CD4-positive, alpha-beta T cell (primary cell): ENCODE measurements at regions of chr9 and their contacts with region 1.

Region 1: GRCh38 chr9:96449845-96450612 is at the start of gene HABP4:
- DNase-seq: peak; percentile 89 to 98 (median 95)
- ATAC-seq: peak; percentile 90
- H3K4me3 ChIP-seq: peak within 1 kb of the TSS; percentile 89
- H3K4me3 Mint-ChIP-seq: peak within 1 kb of the TSS; percentile 95
- H3K27ac ChIP-seq: peak within 1 kb of the TSS in 1 of 2 donors; percentile 17
- H3K27ac Mint-ChIP-seq: peak within 1 kb of the TSS; percentile 86
- H3K4me1 ChIP-seq: peaks cover 27% of the 10 kb centered on the region
- H3K4me1 Mint-ChIP-seq: peaks cover 27% of the 10 kb centered on the region
- H3K27me3 ChIP-seq: no peaks in the 10 kb centered on the region
- H3K27me3 Mint-ChIP-seq: peaks cover 7% of the 10 kb centered on the region
- CTCF ChIP-seq: no peak
- total RNA-seq, gene HABP4: 29.7 to 31.7 TPM

Region 2: DNA sequence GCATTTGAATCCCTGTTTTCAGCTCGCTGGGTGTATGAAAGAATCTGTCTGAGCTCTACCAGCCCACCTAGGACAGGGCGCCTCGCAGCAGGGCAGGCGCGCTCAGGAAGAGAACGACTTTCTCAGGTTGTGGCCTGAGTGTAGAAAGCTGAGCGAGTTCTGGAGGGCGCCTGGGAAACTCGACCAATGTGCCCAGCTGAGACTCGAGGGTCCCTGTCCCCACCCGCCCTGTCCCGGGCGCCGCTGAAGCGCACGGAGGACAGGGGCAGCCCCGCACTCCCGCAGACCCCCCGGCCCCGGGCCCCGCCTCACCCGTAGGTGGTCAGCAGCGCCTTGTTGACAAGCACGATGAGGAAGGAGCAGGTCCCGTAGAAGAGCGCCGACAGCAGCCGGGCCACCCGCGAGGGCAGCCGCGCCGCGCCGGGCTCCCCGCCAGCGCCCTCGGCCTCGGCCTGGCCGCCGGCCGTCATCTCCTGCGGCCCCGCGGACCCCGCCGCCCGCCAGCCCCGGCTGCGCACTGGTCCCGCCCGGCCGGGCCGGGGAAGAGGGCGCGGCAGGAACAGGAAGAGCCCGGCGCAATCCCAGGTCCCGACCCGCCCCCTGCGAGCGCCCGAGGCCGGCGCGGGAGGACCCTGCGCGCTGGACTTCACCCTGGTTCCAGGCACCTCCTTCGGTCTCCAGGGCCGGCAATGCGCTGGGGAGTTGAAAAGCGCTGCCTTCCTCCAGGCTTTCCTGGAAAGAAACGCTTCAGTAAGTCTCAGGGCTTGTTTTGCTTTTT is 66.7 kb before region 1 on chr9 and contains the start of gene SLC35D2:
- CTCF ChIA-PET with region 1: interaction called, 4 read pairs
- POLR2A ChIA-PET with region 1: interaction called, 5 read pairs
- intact Hi-C with region 1: loop called in 1 of 2 experiments (anchors 5 kb)
- DNase-seq: peak in 6 of 14 experiments; percentile 4 to 45 (median 21)
- ATAC-seq: peak; percentile 48
- H3K4me3 ChIP-seq: peak within 1 kb of the TSS; percentile 54
- H3K4me3 Mint-ChIP-seq: peak within 1 kb of the TSS; percentile 90
- H3K27ac ChIP-seq: no peak within 1 kb of the TSS
- H3K27ac Mint-ChIP-seq: peak within 1 kb of the TSS; percentile 84
- H3K4me1 ChIP-seq: peaks cover 28% of the 10 kb centered on the region
- H3K4me1 Mint-ChIP-seq: peaks cover 27% of the 10 kb centered on the region
- H3K27me3 ChIP-seq: no peaks in the 10 kb centered on the region
- H3K27me3 Mint-ChIP-seq: no peaks in the 10 kb centered on the region
- CTCF ChIP-seq: no peak
- total RNA-seq, gene SLC35D2: 13.2 to 14.7 TPM

Region 3: DNA sequence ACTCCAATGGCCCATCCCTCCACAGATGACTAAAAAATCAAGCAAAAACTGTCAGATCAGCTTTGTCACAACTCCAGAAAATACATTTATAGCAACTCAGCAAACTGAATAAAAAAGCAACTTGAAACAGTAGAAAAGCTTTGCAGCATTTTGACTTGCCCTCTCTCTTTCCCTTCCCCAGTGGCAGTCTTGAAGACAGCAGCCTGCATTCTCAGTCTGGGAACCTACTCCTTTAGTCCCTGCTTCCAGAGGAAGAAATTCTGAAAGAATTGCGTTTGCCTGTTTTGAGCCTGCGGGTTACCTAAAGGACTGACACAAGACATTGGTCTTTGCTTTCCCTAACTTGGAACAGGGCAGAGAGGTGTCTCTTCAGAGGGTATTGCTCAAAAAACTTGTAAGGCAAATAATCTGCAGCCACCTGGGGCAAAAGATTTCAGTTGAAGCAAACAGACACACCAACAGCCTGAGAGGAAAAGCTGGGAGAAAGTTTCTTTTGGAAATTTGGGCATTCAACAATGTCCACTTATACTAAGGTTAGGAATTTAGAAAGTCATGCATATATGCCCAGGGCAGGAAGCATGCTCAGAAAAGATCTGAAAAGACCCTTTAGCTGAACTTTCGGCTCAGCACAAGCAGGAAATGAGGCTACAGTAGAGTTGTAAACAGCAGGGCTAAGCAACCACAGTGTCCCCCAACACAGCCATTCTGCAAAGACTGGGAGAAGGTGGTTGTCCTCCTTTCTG is 51.3 kb before region 1 on chr9:
- CTCF ChIA-PET with region 1: interaction called, 3 read pairs
- POLR2A ChIA-PET with region 1: interaction called, 21 read pairs
- intact Hi-C with region 1: no loop called
- DNase-seq: peak in 5 of 14 experiments; percentile 17 to 67 (median 38)
- ATAC-seq: peak; percentile 79
- H3K4me3 ChIP-seq: no peak overlapping the region
- H3K4me3 Mint-ChIP-seq: peak overlapping the region; percentile 74
- H3K27ac ChIP-seq: peak overlapping the region; percentile 48 to 79
- H3K27ac Mint-ChIP-seq: peak overlapping the region; percentile 92
- H3K4me1 ChIP-seq: peaks cover 23% of the 10 kb centered on the region
- H3K4me1 Mint-ChIP-seq: peaks cover 25% of the 10 kb centered on the region
- H3K27me3 ChIP-seq: no peaks in the 10 kb centered on the region
- H3K27me3 Mint-ChIP-seq: no peaks in the 10 kb centered on the region
- CTCF ChIP-seq: no peak

Region 4: DNA sequence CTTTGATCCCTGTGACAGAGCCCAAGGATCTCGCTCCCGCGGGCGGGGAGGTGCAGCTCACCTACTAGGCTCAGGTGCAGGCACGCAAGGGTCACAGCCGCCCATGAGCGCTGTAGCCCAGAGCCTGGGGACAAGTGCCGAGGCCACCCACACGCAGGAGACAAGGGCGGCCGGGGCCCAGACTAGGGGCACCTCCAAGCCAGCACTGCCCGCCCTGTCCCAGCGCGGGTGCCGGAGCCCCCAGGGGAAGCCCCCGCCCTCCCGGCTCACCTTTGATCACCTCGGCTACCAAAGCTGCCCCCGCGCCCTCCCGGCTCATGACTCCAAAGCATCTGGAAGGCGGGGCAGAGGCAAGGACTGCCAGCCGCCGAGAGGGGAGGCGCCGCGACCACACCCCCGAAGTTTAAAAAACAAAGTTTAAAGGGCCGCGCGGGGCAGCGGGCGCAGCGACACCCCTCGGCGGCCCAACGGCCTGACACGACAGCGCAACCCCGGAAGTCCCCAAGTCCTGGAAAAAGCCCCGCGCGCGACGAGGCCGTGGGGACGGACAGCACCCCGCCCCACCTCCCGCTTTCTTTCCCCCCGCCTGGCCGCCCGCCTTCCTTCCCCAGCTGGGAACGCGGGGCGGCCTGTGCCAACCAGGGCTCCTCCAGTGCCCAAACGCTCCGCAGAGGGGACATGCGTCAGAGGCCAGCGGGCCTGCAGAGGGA is 116.6 kb after region 1 on chr9:
- CTCF ChIA-PET with region 1: interaction called, 8 read pairs
- POLR2A ChIA-PET with region 1: interaction called, 41 read pairs
- intact Hi-C with region 1: loop called (anchors 2 to 5 kb)
- DNase-seq: peak; percentile 65 to 92 (median 78)
- ATAC-seq: peak; percentile 83
- H3K4me3 ChIP-seq: peak overlapping the region; percentile 85
- H3K4me3 Mint-ChIP-seq: peak overlapping the region; percentile 85
- H3K27ac ChIP-seq: peak overlapping the region; percentile 64 to 73
- H3K27ac Mint-ChIP-seq: peak overlapping the region; percentile 62
- H3K4me1 ChIP-seq: peaks cover 15% of the 10 kb centered on the region
- H3K4me1 Mint-ChIP-seq: peaks cover 31% of the 10 kb centered on the region
- H3K27me3 ChIP-seq: no peaks in the 10 kb centered on the region
- H3K27me3 Mint-ChIP-seq: no peaks in the 10 kb centered on the region
- CTCF ChIP-seq: peak; percentile 82

Region 5: DNA sequence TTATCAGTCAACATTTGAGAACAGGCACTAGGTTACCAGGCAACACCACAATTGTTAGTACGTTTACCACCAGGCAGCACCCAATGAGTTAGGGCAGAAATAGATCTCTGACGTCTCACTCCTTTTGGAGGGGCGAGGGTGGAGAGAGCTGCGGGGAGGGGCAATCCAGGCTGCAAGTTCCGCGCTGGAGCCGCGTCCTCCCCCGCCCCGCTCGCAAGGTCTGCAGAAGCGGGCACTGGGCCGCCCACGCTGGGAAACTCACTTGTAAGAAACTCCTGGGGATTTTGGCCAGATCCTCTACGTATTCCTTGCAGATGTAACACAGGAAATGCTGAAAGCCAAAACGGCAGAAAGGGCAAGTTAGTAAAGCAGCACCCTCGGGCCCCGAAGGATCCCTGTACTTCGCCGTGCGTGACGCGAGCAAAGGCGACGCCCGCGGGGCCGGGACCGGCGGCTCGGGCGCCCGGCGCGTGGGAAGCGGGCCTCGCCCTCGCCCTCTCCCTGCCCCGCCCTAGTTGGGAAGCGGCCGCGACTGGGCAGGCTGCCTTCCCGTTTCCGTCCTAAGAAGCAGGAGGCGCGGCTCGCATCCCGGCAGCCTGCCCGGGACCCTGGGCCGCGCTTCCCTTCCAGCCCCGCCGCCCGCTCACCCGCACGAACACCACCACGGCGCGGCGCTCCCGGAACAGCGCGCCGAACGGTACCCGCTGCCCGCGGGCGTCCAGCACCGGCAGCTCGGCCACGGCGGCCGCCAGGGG is 204.6 kb after region 1 on chr9:
- CTCF ChIA-PET with region 1: interaction called, 3 read pairs
- POLR2A ChIA-PET with region 1: interaction called, 3 read pairs
- intact Hi-C with region 1: loop called (anchors 1 to 2 kb)
- DNase-seq: peak; percentile 43 to 94 (median 72)
- ATAC-seq: peak; percentile 87
- H3K4me3 ChIP-seq: peak overlapping the region; percentile 58
- H3K4me3 Mint-ChIP-seq: peak overlapping the region; percentile 90
- H3K27ac ChIP-seq: peak overlapping the region; percentile 52 to 73
- H3K27ac Mint-ChIP-seq: peak overlapping the region; percentile 93
- H3K4me1 ChIP-seq: peaks cover 20% of the 10 kb centered on the region
- H3K4me1 Mint-ChIP-seq: peaks cover 32% of the 10 kb centered on the region
- H3K27me3 ChIP-seq: no peaks in the 10 kb centered on the region
- H3K27me3 Mint-ChIP-seq: no peaks in the 10 kb centered on the region
- CTCF ChIP-seq: no peak